A673 (cell line): ENCODE measurements at regions of chr12 and their contacts with region 1.

Region 1: GRCh38 chr12:87678453-87678852 is 350.7 kb downstream of the C12orf50 start:
- DNase-seq: no peak
- H3K4me3 ChIP-seq: no peak overlapping the region
- H3K27ac ChIP-seq: no peak overlapping the region
- H3K4me1 ChIP-seq: no peaks in the 10 kb centered on the region
- H3K27me3 ChIP-seq: no peaks in the 10 kb centered on the region
- CTCF ChIP-seq: no peak

Region 2: GRCh38 chr12:87150969-87151662 is 527.3 kb before region 1 on chr12:
- CTCF ChIA-PET with region 1: no interaction called
- POLR2A ChIA-PET with region 1: no interaction called
- intact Hi-C with region 1: no loop called
- DNase-seq: peak; percentile 6
- H3K4me3 ChIP-seq: no peak overlapping the region
- H3K27ac ChIP-seq: no peak overlapping the region
- H3K4me1 ChIP-seq: no peaks in the 10 kb centered on the region
- H3K27me3 ChIP-seq: no peaks in the 10 kb centered on the region
- CTCF ChIP-seq: no peak

Region 3: DNA sequence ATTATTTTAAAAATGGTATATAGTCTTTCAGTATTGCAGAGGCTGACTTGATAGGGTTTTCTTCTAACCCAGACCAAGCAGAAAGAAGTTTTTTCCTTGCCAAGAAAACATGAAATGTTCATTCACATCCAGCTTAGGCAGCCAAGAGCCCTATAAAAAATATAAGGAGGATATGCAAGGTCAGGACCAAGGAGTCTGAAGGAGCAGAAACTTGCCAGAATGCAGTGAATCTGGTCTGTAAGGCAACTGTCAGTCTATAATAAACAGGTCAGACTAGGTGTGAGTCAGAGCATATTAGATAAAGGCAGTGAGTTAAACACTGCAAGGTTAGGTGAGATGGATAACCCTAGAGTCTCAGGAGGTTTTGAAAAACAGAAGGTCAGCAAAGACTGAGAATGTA is 294.8 kb before region 1 on chr12:
- CTCF ChIA-PET with region 1: no interaction called
- POLR2A ChIA-PET with region 1: no interaction called
- intact Hi-C with region 1: no loop called
- DNase-seq: peak; percentile 29
- H3K4me3 ChIP-seq: no peak overlapping the region
- H3K27ac ChIP-seq: no peak overlapping the region
- H3K4me1 ChIP-seq: peaks cover 16% of the 10 kb centered on the region
- H3K27me3 ChIP-seq: peaks cover 63% of the 10 kb centered on the region
- CTCF ChIP-seq: no peak

Region 4: GRCh38 chr12:87870493-87871460 is 192.3 kb after region 1 on chr12:
- CTCF ChIA-PET with region 1: no interaction called
- POLR2A ChIA-PET with region 1: no interaction called
- intact Hi-C with region 1: no loop called
- DNase-seq: no peak
- H3K4me3 ChIP-seq: no peak overlapping the region
- H3K27ac ChIP-seq: no peak overlapping the region
- H3K4me1 ChIP-seq: no peaks in the 10 kb centered on the region
- H3K27me3 ChIP-seq: no peaks in the 10 kb centered on the region
- CTCF ChIP-seq: no peak

Region 5: DNA sequence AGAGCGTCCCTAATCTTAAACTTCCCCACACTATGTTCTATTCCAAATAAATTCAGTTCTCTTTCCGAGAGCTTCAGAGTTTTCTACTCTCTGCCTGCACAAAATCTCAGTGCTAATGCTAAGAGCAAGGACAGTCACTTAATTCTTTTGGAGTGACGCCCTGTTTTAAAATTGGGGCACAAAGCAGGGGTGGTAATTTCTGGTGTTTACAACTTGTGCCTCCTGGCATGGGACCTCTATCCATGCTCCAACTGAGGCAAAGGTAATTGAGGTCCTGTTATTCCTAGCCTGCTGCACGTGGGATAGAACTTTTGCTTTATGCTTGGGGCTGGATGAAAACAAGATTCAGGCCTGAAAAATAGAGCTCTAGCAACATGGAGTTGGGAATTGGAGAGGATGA is 327.9 kb after region 1 on chr12:
- CTCF ChIA-PET with region 1: no interaction called
- POLR2A ChIA-PET with region 1: no interaction called
- intact Hi-C with region 1: loop called (anchors 10 kb)
- DNase-seq: no peak
- H3K4me3 ChIP-seq: no peak overlapping the region
- H3K27ac ChIP-seq: no peak overlapping the region
- H3K4me1 ChIP-seq: no peaks in the 10 kb centered on the region
- H3K27me3 ChIP-seq: no peaks in the 10 kb centered on the region
- CTCF ChIP-seq: no peak

Region 6: DNA sequence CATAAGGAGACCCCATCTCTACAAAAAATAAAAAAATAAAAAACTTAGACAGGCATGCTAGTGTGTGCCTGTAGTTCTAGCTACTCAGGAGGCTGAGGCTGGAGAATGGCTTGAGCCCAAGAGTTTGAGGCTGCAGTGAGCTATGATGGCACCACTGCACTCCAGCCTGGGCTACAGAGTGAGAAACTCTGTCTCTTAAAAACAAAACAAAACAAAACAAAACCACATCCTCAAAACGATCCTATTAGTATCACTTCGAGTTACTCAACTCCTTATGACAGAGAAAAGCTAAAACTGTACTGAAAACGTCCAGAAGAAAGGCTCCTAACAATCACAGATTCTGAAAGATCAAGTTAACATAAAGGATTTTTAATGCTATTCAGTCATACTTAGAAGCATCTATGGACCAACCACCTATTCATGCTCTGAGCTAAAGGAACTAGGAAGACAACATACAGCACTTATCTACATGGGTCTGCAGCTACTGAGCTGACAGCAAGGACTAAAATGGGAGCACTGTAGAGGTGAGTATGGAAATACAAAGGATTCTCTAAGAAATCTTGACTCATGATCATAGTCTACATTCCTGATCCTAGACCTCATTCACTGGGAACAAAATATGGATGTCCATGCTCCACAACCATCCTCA is 1749.2 kb after region 1 on chr12:
- CTCF ChIA-PET with region 1: no interaction called
- POLR2A ChIA-PET with region 1: no interaction called
- intact Hi-C with region 1: no loop called
- DNase-seq: no peak
- H3K4me3 ChIP-seq: no peak overlapping the region
- H3K27ac ChIP-seq: no peak overlapping the region
- H3K4me1 ChIP-seq: peaks cover 4% of the 10 kb centered on the region
- H3K27me3 ChIP-seq: no peaks in the 10 kb centered on the region
- CTCF ChIP-seq: no peak